AG04449 (cell line): ENCODE measurements at regions of chr3 and their contacts with region 1.

Region 1: GRCh38 chr3:129596194-129597086 is 10.0 kb downstream of the PLXND1 start:
- DNase-seq: peak; percentile 81
- H3K4me3 ChIP-seq: peak overlapping the region; percentile 29
- CTCF ChIP-seq: no peak

Region 2: DNA sequence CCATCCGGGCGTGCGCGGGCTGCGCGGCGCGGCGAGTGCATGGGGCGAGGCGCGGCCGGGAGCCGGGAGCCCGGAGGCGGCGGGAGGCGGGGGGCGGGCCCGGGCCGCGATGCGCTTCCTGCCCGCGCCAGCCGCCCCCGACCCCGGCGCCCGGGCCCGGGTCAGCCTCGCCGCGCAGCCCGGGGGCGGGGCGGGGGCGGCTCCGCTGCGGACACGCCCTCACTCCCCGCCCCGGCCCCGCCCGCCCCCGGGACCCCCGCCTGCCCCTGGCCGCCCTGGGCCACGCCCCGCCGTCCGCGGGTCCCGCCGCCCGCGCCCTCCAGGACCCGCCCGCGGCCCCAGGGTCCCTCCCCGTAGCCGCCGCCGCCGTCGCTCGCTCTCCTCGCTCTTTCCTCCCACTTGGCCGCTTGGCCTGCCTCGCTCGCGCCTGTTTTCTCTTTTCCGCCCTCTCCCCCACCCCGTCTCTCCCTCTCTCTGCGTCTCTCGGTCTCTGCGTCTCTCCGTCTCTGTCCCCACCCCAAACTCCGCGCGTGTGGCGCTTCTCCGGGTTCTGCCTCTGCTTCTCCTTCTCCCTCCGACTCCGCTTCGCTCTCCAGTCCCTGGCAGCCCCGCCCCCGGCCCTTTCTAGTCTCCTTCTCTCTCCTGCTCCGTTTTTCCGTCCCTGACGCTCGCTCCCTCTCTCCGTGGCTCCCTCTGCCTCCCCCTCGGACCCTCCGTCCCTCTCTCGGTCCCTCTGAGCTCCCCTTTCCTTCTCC is 10.4 kb after region 1 on chr3 and contains the start of gene PLXND1:
- CTCF ChIA-PET with region 1: interaction called, 19 read pairs
- POLR2A ChIA-PET with region 1: interaction called, 11 read pairs
- DNase-seq: no peak
- H3K4me3 ChIP-seq: peak within 1 kb of the TSS; percentile 71
- CTCF ChIP-seq: no peak

Region 3: GRCh38 chr3:129633751-129634392 is 37.4 kb after region 1 on chr3:
- CTCF ChIA-PET with region 1: no interaction called
- POLR2A ChIA-PET with region 1: no interaction called
- DNase-seq: no peak
- H3K4me3 ChIP-seq: no peak overlapping the region
- CTCF ChIP-seq: no peak

Region 4: GRCh38 chr3:129708328-129708861 is 112.0 kb after region 1 on chr3:
- CTCF ChIA-PET with region 1: no interaction called
- POLR2A ChIA-PET with region 1: no interaction called
- DNase-seq: no peak
- H3K4me3 ChIP-seq: no peak overlapping the region
- CTCF ChIP-seq: no peak